ENCODE measurements at regions of chrX and their contacts with region 1.

Region 1: GRCh38 chrX:102950908-102951866 is 14.1 kb downstream of the RAB40AL start:
- DNase-seq: peak in 1 of 2 donors; percentile 63
- ATAC-seq: peak; percentile 72
- H3K4me3 ChIP-seq: no peak overlapping the region
- H3K27ac ChIP-seq: no peak overlapping the region
- H3K4me1 ChIP-seq: no peaks in the 10 kb centered on the region
- H3K27me3 ChIP-seq: no peaks in the 10 kb centered on the region

Region 2: DNA sequence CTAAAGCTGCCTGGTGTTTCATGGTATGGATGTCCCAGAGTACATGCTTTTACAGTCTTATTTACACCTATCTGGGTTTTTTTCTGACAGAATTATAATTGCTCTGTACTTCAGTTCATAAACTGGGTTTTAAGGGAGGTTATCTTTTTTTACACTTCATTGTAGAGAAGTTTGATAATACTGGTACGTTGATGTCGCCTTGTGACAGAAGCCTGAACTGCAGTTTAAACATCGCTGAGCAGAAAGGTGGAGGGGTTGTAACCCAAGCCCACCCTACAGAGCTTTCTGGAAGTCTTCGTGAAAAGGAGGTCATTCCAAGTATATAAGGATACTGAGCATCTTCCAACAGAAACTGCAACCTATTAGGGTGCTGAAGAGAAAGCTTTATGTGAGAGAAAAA is 66.4 kb after region 1 on chrX:
- intact Hi-C with region 1: no loop called
- DNase-seq: no peak
- ATAC-seq: no peak
- H3K4me3 ChIP-seq: no peak overlapping the region
- H3K27ac ChIP-seq: no peak overlapping the region
- H3K4me1 ChIP-seq: no peaks in the 10 kb centered on the region
- H3K27me3 ChIP-seq: no peaks in the 10 kb centered on the region

Region 3: DNA sequence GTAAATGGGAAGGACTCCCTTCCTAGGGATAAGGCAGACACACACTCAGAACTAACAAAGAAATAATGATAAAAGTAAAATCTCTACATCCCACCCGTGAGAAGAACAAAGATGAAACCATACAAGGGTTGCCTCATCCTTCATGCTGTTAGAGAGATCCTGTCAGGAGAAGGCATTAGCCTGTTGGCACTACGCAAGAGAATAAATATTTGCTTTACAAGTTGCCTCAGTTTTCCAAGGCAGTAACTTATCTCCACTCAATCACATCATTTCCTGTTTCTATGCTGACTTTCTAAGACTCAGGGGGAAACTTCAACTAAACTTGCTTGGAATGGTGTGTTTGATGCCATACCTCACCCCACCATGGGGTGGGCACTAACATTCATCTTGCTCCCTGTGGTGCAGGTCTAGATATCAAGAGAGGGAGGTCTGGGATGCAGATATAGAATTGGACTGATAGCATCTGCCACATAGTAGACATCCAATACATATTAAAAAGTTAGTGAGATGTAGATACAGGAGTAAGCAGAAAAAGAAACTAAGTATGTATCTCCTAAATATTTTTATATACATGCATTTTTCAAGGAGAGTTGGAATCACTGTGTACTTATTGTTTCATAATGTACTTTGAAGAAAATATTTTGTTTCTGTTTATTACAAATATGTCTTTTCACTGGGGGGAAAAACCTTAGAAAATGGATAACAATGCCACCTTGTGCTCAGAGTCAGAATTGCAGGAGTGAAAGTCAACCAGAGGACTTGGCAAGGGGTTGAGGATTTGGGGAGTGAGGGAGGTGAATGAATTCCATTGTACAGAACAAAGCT is 206.5 kb after region 1 on chrX:
- intact Hi-C with region 1: loop called (anchors 5 kb)
- DNase-seq: no peak
- ATAC-seq: no peak
- H3K4me3 ChIP-seq: no peak overlapping the region
- H3K27ac ChIP-seq: no peak overlapping the region
- H3K4me1 ChIP-seq: no peaks in the 10 kb centered on the region
- H3K27me3 ChIP-seq: no peaks in the 10 kb centered on the region

Region 4: GRCh38 chrX:103175944-103176753 is 225.0 kb after region 1 on chrX:
- intact Hi-C with region 1: loop called (anchors 5 kb)
- DNase-seq: peak; percentile 62 to 82
- ATAC-seq: no peak
- H3K4me3 ChIP-seq: no peak overlapping the region
- H3K27ac ChIP-seq: no peak overlapping the region
- H3K4me1 ChIP-seq: no peaks in the 10 kb centered on the region
- H3K27me3 ChIP-seq: no peaks in the 10 kb centered on the region